ENCODE measurements at regions of chr2 and their contacts with region 1.

Region 1: GRCh38 chr2:196068271-196069209 is at the start of gene DNAH7:
- DNase-seq: peak; percentile 84 to 94 (median 92)
- ATAC-seq: peak; percentile 96
- H3K4me3 ChIP-seq: peak within 1 kb of the TSS; percentile 69
- H3K4me3 Mint-ChIP-seq: peak within 1 kb of the TSS; percentile 77 to 92 (median 88)
- H3K27ac ChIP-seq: peak within 1 kb of the TSS; percentile 45
- H3K27ac Mint-ChIP-seq: peak within 1 kb of the TSS; percentile 75 to 94 (median 86)
- H3K4me1 ChIP-seq: peaks cover 6% of the 10 kb centered on the region in 2 donors
- H3K4me1 Mint-ChIP-seq: peaks cover 6 to 16% (median 12%) of the 10 kb centered on the region in 7 donors
- H3K27me3 ChIP-seq: peaks cover 0 to 3% of the 10 kb centered on the region in 2 donors
- H3K27me3 Mint-ChIP-seq: peaks cover 0 to 33% (median 3%) of the 10 kb centered on the region in 5 donors
- total RNA-seq, gene DNAH7: not detected

Region 2: GRCh38 chr2:194464964-194465638 is 1603.4 kb before region 1 on chr2:
- CTCF ChIA-PET with region 1: no interaction called
- POLR2A ChIA-PET with region 1: no interaction called
- intact Hi-C with region 1: loop called in 1 of 2 experiments (anchors 10 kb)
- DNase-seq: peak in 2 of 9 donors; percentile 11 to 25
- ATAC-seq: no peak
- H3K4me3 ChIP-seq: no peak overlapping the region
- H3K4me3 Mint-ChIP-seq: no peak overlapping the region
- H3K27ac ChIP-seq: no peak overlapping the region
- H3K27ac Mint-ChIP-seq: no peak overlapping the region
- H3K4me1 ChIP-seq: no peaks in the 10 kb centered on the region
- H3K4me1 Mint-ChIP-seq: no peaks in the 10 kb centered on the region
- H3K27me3 ChIP-seq: no peaks in the 10 kb centered on the region
- H3K27me3 Mint-ChIP-seq: no peaks in the 10 kb centered on the region

Region 3: DNA sequence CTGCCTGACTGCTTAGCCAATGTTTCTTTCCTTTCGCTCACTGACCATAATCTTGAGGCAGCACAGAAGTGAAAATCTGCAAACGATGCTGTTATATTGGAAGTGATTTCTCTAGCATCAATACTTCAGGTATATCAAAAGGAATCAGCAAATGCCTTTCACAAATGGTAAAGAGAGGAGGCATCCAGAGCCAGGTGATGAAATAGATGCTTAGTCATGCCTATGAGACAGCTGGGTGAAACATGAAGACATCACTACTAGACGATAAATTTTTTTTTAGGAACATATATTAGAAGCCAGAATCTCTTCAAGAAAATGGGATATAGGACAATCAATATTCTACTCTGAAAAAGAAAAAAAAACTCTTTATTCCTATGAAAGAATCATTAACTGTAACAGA is 660.8 kb before region 1 on chr2:
- CTCF ChIA-PET with region 1: no interaction called
- POLR2A ChIA-PET with region 1: no interaction called
- intact Hi-C with region 1: loop called in 1 of 2 experiments (anchors 1 kb)
- DNase-seq: no peak
- ATAC-seq: no peak
- H3K4me3 ChIP-seq: no peak overlapping the region
- H3K4me3 Mint-ChIP-seq: no peak overlapping the region
- H3K27ac ChIP-seq: no peak overlapping the region
- H3K27ac Mint-ChIP-seq: peak overlapping the region in 1 of 9 donors; percentile 76
- H3K4me1 ChIP-seq: no peaks in the 10 kb centered on the region
- H3K4me1 Mint-ChIP-seq: peaks cover 0 to 17% (median under 1%) of the 10 kb centered on the region in 7 donors
- H3K27me3 ChIP-seq: no peaks in the 10 kb centered on the region
- H3K27me3 Mint-ChIP-seq: no peaks in the 10 kb centered on the region

Region 4: GRCh38 chr2:195559431-195559914 is 509.1 kb before region 1 on chr2:
- CTCF ChIA-PET with region 1: no interaction called
- POLR2A ChIA-PET with region 1: interaction called, 6 read pairs
- intact Hi-C with region 1: loop called (anchors 5 kb)
- DNase-seq: peak; percentile 14 to 93 (median 90)
- ATAC-seq: peak; percentile 94
- H3K4me3 ChIP-seq: peak overlapping the region; percentile 33
- H3K4me3 Mint-ChIP-seq: peak overlapping the region; percentile 61 to 89 (median 76)
- H3K27ac ChIP-seq: peak overlapping the region; percentile 71
- H3K27ac Mint-ChIP-seq: peak overlapping the region; percentile 84 to 99 (median 94)
- H3K4me1 ChIP-seq: peaks cover 58 to 74% of the 10 kb centered on the region in 2 donors
- H3K4me1 Mint-ChIP-seq: peaks cover 43 to 78% (median 69%) of the 10 kb centered on the region in 7 donors
- H3K27me3 ChIP-seq: no peaks in the 10 kb centered on the region
- H3K27me3 Mint-ChIP-seq: no peaks in the 10 kb centered on the region

Region 5: DNA sequence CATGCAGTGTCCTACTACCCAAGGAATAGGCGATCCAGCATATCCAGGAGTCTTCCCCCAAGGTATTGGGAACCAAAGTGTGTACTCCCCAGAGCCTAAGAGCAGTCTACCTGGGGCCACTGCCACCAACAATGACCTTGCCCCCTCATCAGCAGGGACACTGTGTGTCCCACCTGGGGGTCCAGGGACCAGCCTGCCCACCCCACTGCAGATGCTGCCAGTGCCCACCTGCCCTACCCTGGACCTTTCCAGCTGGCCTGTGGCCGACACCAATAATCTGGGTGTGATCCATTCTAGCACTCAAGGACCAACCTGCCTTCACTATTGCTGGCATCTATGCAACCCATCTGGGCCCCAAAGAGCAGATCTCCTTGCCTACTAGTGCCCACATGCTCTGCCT is 32.1 kb before region 1 on chr2:
- CTCF ChIA-PET with region 1: no interaction called
- POLR2A ChIA-PET with region 1: no interaction called
- intact Hi-C with region 1: no loop called
- DNase-seq: no peak
- ATAC-seq: no peak
- H3K4me3 ChIP-seq: no peak overlapping the region
- H3K4me3 Mint-ChIP-seq: no peak overlapping the region
- H3K27ac ChIP-seq: no peak overlapping the region
- H3K27ac Mint-ChIP-seq: no peak overlapping the region
- H3K4me1 ChIP-seq: no peaks in the 10 kb centered on the region
- H3K4me1 Mint-ChIP-seq: no peaks in the 10 kb centered on the region
- H3K27me3 ChIP-seq: no peaks in the 10 kb centered on the region
- H3K27me3 Mint-ChIP-seq: peaks cover 4 to 36% (median 19%) of the 10 kb centered on the region in 5 donors

Region 6: DNA sequence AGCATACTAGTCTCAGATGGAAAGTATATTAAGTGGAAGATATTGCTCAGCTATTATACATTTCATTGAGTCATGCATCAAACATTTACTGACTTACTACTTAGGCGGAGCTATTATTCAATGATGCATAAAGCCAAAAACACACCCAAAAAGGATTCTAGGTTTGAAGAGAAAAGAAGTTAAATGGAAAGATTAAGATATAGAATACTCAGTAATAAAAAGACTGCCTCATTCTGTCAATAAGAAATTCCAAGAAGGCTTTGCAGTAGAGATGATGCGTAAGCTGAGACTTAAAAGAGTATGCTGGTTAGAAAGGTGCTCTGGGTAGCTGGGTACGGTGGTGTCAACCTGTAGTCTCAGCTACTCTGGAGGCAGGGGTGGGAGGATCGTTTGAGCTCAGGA is 75.2 kb after region 1 on chr2:
- CTCF ChIA-PET with region 1: no interaction called
- POLR2A ChIA-PET with region 1: no interaction called
- intact Hi-C with region 1: no loop called
- DNase-seq: no peak
- ATAC-seq: no peak
- H3K4me3 ChIP-seq: no peak overlapping the region
- H3K4me3 Mint-ChIP-seq: peak overlapping the region in 9 of 10 donors; percentile 23 to 87 (median 52)
- H3K27ac ChIP-seq: peak overlapping the region; percentile 49
- H3K27ac Mint-ChIP-seq: peak overlapping the region; percentile 71 to 92 (median 87)
- H3K4me1 ChIP-seq: peaks cover 48 to 50% of the 10 kb centered on the region in 2 donors
- H3K4me1 Mint-ChIP-seq: peaks cover 36 to 90% (median 75%) of the 10 kb centered on the region in 7 donors
- H3K27me3 ChIP-seq: no peaks in the 10 kb centered on the region
- H3K27me3 Mint-ChIP-seq: no peaks in the 10 kb centered on the region

Region 7: GRCh38 chr2:196205881-196206435 is 137.4 kb after region 1 on chr2:
- CTCF ChIA-PET with region 1: no interaction called
- POLR2A ChIA-PET with region 1: no interaction called
- intact Hi-C with region 1: loop called in 1 of 2 experiments (anchors 2 kb)
- DNase-seq: no peak
- ATAC-seq: no peak
- H3K4me3 ChIP-seq: no peak overlapping the region
- H3K4me3 Mint-ChIP-seq: no peak overlapping the region
- H3K27ac ChIP-seq: no peak overlapping the region
- H3K27ac Mint-ChIP-seq: peak overlapping the region in 7 of 9 donors; percentile 28 to 85 (median 66)
- H3K4me1 ChIP-seq: peaks cover 17 to 31% of the 10 kb centered on the region in 2 donors
- H3K4me1 Mint-ChIP-seq: peaks cover 29 to 75% (median 51%) of the 10 kb centered on the region in 7 donors
- H3K27me3 ChIP-seq: no peaks in the 10 kb centered on the region
- H3K27me3 Mint-ChIP-seq: no peaks in the 10 kb centered on the region

Region 8: GRCh38 chr2:196337208-196337953 is 268.8 kb after region 1 on chr2:
- CTCF ChIA-PET with region 1: interaction called, 10 read pairs
- POLR2A ChIA-PET with region 1: interaction called, 4 read pairs
- intact Hi-C with region 1: loop called in 1 of 2 experiments (anchors 1 kb)
- DNase-seq: peak in 5 of 9 donors; percentile 10 to 39 (median 19)
- ATAC-seq: peak; percentile 52
- H3K4me3 ChIP-seq: no peak overlapping the region
- H3K4me3 Mint-ChIP-seq: no peak overlapping the region
- H3K27ac ChIP-seq: no peak overlapping the region
- H3K27ac Mint-ChIP-seq: no peak overlapping the region
- H3K4me1 ChIP-seq: no peaks in the 10 kb centered on the region
- H3K4me1 Mint-ChIP-seq: peaks cover 0 to 6% (median 1%) of the 10 kb centered on the region in 7 donors
- H3K27me3 ChIP-seq: no peaks in the 10 kb centered on the region
- H3K27me3 Mint-ChIP-seq: peaks cover 0 to 18% (median 3%) of the 10 kb centered on the region in 5 donors